Activated T-helper 2 cell treated with anti-CD3 and anti-CD28 coated beads, Interferon-gamma antibody, Interleukin-2, Interleukin-4, amounts not matched to agents 10 μg/mL and 5 μg/mL and 100 μg/mL, durations not matched to agents 14 hours and 24 hours and 36 hours (primary cell): ENCODE measurements at regions of chr1 and their contacts with region 1.

Region 1: DNA sequence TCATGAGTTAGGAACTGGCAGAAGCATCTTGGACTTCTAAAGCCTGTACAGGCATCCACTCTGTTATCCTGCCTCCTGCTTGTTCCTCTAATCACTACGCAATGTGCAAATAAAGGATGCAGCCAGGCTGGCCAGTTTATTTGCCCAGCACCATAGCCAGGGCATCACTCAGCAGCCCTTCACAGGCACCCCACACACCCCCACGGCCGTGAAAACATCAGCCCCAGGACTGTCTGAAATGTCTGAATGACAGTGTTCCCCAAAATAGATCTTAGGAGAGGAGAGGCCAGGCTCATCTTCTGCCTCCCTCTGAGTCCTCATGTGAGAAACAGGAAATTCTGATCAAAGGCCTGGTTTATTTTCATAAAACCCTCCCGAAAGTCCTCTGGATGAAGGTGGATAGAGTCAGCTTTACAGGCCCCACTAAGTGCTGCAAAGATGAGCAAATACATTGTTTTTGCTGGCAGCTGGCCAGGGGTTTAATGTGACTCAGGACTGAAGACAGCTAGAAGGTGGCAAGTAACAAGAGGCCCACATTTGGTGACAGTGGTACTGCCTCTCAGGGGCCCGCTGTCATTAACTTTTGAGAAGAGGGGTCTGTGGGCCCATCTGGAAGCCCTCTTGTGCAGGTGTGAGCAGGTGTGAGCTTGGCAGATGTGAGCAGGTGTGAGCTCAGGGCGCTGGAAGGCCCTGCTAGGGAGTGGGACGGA is 32.9 kb downstream of the GRHL3 start:
- DNase-seq: no peak
- H3K4me3 Mint-ChIP-seq: no peak overlapping the region
- H3K27ac Mint-ChIP-seq: peak overlapping the region; percentile 11
- H3K4me1 Mint-ChIP-seq: peaks cover 42% of the 10 kb centered on the region
- H3K27me3 Mint-ChIP-seq: peaks cover 1% of the 10 kb centered on the region

Region 2: DNA sequence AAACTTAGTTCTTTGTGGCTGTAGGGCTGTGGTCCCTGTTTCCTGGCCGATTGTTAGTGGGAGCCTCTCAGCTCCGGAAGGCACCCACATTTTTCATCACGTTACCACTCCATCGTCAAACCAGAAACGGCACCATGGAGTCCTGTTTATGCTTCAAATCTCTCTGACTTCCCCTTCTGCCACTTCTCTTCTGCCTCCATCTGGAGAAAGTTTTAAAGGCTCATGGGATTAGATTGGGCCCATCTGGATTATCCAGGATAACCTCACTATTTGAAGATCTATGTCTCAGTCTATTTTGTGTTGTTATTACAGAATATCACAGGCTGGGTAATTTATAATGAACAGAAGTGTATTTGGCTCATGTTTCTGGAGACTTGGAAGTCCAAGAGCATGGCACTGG is 189.9 kb before region 1 on chr1:
- intact Hi-C with region 1: no loop called
- DNase-seq: no peak
- H3K4me3 Mint-ChIP-seq: no peak overlapping the region
- H3K27ac Mint-ChIP-seq: no peak overlapping the region
- H3K4me1 Mint-ChIP-seq: no peaks in the 10 kb centered on the region
- H3K27me3 Mint-ChIP-seq: peaks cover 1% of the 10 kb centered on the region

Region 3: GRCh38 chr1:24263251-24263651 is 88.8 kb before region 1 on chr1:
- intact Hi-C with region 1: no loop called
- DNase-seq: no peak
- H3K4me3 Mint-ChIP-seq: no peak overlapping the region
- H3K27ac Mint-ChIP-seq: no peak overlapping the region
- H3K4me1 Mint-ChIP-seq: peaks cover 2% of the 10 kb centered on the region
- H3K27me3 Mint-ChIP-seq: peaks cover 15% of the 10 kb centered on the region

Region 4: GRCh38 chr1:24321697-24322469 is 30.2 kb before region 1 on chr1:
- intact Hi-C with region 1: loop called (anchors 2 kb)
- DNase-seq: peak; percentile 82
- H3K4me3 Mint-ChIP-seq: peak overlapping the region; percentile 67
- H3K27ac Mint-ChIP-seq: peak overlapping the region; percentile 43
- H3K4me1 Mint-ChIP-seq: peaks cover 26% of the 10 kb centered on the region
- H3K27me3 Mint-ChIP-seq: peaks cover 86% of the 10 kb centered on the region

Region 5: GRCh38 chr1:24364975-24365678 is 13.1 kb after region 1 on chr1:
- intact Hi-C with region 1: loop called (anchors 1 kb)
- DNase-seq: peak; percentile 23
- H3K4me3 Mint-ChIP-seq: no peak overlapping the region
- H3K27ac Mint-ChIP-seq: peak overlapping the region; percentile 74
- H3K4me1 Mint-ChIP-seq: peaks cover 23% of the 10 kb centered on the region
- H3K27me3 Mint-ChIP-seq: no peaks in the 10 kb centered on the region

Region 6: GRCh38 chr1:24384251-24385090 is 32.4 kb after region 1 on chr1:
- intact Hi-C with region 1: loop called (anchors 1 kb)
- DNase-seq: peak; percentile 28
- H3K4me3 Mint-ChIP-seq: peak overlapping the region; percentile 3
- H3K27ac Mint-ChIP-seq: peak overlapping the region; percentile 71
- H3K4me1 Mint-ChIP-seq: peaks cover 26% of the 10 kb centered on the region
- H3K27me3 Mint-ChIP-seq: no peaks in the 10 kb centered on the region